Activated T-helper 1 cell treated with anti-CD3 and anti-CD28 coated beads, Interleukin-12 subunit alpha, Interleukin-12 subunit beta, Interleukin-2, Interleukin-4 antibody, amounts not matched to agents 30 ng/mL and 10 ng/mL and 1 ng/mL, durations not matched to agents 14 hours and 24 hours and 36 hours (primary cell): ENCODE measurements at regions of chr9 and their contacts with region 1.

Region 1: GRCh38 chr9:30075451-30076199 is 2308.8 kb upstream of the ACO1 start:
- DNase-seq: peak; percentile 26
- H3K4me3 Mint-ChIP-seq: no peak overlapping the region
- H3K27ac Mint-ChIP-seq: peak overlapping the region; percentile 43
- H3K4me1 Mint-ChIP-seq: peaks cover 36% of the 10 kb centered on the region
- H3K27me3 Mint-ChIP-seq: peaks cover 2% of the 10 kb centered on the region

Region 2: GRCh38 chr9:29750062-29750461 is 325.6 kb before region 1 on chr9:
- intact Hi-C with region 1: no loop called
- DNase-seq: no peak
- H3K4me3 Mint-ChIP-seq: no peak overlapping the region
- H3K27ac Mint-ChIP-seq: no peak overlapping the region
- H3K4me1 Mint-ChIP-seq: no peaks in the 10 kb centered on the region
- H3K27me3 Mint-ChIP-seq: no peaks in the 10 kb centered on the region

Region 3: DNA sequence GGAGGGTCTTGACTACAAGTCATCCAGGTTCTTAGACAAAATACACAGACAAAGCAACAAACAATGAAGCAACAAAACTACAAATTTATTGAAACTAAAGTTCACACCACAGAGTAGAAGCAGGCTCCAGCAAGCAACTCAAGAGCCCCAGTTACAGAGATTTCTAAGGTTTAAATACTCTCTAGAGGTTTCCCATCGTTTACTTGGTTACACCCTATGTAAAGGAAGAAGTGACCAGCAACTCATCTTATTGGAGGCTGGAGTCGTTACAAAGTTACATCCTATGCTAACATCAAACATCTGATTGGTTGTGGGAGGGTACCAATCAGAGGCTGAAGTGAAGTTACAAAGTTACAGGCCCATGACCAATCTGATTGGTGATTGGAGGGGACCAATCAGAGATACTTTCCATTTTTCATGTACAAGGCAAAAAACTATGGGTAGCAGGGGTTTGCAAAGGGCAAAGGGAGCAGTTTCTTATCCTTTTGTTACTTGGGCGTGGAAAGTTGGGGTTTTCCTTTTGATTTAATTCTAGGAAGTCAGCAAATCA is 209.8 kb before region 1 on chr9:
- intact Hi-C with region 1: loop called (anchors 2 kb)
- DNase-seq: no peak
- H3K4me3 Mint-ChIP-seq: no peak overlapping the region
- H3K27ac Mint-ChIP-seq: no peak overlapping the region
- H3K4me1 Mint-ChIP-seq: no peaks in the 10 kb centered on the region
- H3K27me3 Mint-ChIP-seq: no peaks in the 10 kb centered on the region

Region 4: GRCh38 chr9:30058463-30058862 is 17.2 kb before region 1 on chr9:
- intact Hi-C with region 1: no loop called
- DNase-seq: no peak
- H3K4me3 Mint-ChIP-seq: no peak overlapping the region
- H3K27ac Mint-ChIP-seq: no peak overlapping the region
- H3K4me1 Mint-ChIP-seq: no peaks in the 10 kb centered on the region
- H3K27me3 Mint-ChIP-seq: no peaks in the 10 kb centered on the region

Region 5: DNA sequence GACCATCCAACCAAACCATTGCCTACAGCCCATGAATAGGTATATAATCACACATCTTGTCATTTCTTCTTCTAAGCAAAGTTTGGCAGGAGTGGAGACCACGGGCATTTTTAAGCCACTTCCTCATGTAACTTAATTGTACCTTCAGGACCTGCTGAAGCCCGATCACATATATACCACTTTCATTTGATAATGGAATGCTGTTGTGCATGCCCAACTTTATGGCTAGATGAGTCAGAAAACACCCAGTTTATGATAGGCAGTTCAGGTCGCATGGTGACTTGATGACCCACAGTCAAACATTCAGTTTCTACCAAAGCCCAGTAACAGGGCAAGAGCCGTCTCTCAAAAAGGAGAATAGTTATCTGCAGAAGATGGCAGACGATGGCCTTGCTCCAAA is 13.8 kb after region 1 on chr9:
- intact Hi-C with region 1: loop called (anchors 1 kb)
- DNase-seq: no peak
- H3K4me3 Mint-ChIP-seq: no peak overlapping the region
- H3K27ac Mint-ChIP-seq: no peak overlapping the region
- H3K4me1 Mint-ChIP-seq: no peaks in the 10 kb centered on the region
- H3K27me3 Mint-ChIP-seq: no peaks in the 10 kb centered on the region